ENCODE measurements at regions of chr5 and their contacts with region 1.

Region 1: DNA sequence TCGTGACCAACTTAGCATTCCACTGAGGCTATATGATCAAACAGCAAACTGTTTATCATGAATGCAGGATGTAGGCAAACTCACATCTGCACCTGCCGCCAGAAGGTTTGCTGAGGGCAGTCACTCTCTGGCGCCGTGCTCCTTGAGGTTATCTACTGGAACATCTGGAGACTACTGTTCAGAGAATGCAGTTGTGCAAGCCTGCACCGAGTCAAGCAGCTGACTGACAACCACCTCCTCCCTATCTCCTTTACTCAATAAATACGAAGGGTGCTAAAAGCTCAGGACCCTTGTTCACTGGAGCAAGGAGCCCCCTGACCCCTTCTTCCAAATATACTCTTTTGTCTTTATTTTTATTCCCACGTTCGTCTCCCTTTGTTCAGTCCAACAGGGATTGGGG is 27.1 kb downstream of the CCDC125 start:
- DNase-seq: no peak
- ATAC-seq: no peak
- H3K4me3 Mint-ChIP-seq: no peak overlapping the region
- H3K27ac Mint-ChIP-seq: no peak overlapping the region
- H3K4me1 Mint-ChIP-seq: peaks cover 12% of the 10 kb centered on the region
- H3K27me3 Mint-ChIP-seq: no peaks in the 10 kb centered on the region

Region 2: DNA sequence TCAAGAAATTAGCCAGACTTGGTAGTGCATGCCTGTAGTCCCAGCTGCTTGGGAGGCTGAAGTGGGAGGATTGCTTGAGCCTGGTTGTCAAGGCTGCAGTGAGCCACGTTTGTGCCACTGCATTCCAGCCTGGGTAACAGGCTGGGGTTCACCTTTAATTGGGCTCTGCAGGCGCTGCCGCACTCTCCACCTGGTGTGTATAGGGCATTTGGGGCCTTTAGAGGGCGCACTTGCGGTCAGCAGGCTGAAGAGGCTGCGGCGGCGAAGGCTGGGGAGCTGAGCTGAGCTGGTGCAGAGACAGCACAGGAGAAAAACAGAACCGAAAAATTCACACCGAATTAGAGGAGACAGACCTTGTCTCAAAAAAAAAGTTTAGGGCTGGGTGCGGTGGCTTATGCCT is 39.6 kb before region 1 on chr5:
- CTCF ChIA-PET with region 1: no interaction called
- POLR2A ChIA-PET with region 1: no interaction called
- intact Hi-C with region 1: no loop called
- DNase-seq: peak; percentile 31
- ATAC-seq: peak; percentile 44
- H3K4me3 Mint-ChIP-seq: no peak overlapping the region
- H3K27ac Mint-ChIP-seq: no peak overlapping the region
- H3K4me1 Mint-ChIP-seq: no peaks in the 10 kb centered on the region
- H3K27me3 Mint-ChIP-seq: no peaks in the 10 kb centered on the region

Region 3: DNA sequence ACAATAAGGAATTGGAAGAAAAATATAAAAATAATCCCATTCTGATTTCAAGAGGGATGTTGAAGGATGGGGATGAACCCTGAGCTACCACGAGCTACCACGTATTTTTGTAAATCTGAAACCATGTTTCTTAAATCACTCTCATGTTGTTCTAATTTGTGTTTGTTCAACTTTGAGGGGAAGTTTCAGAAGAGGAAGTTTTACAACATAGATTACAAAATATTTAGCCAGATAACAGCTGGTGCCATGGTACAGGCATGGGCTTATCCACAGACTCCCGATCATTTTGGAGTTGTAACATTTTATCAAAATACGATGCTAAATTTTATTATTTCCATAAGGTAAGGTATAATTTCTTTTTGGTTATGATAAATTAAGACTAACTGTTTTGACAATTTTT is 11.9 kb after region 1 on chr5:
- CTCF ChIA-PET with region 1: no interaction called
- POLR2A ChIA-PET with region 1: no interaction called
- intact Hi-C with region 1: loop called in 1 of 2 experiments (anchors 2 kb)
- DNase-seq: no peak
- ATAC-seq: no peak
- H3K4me3 Mint-ChIP-seq: no peak overlapping the region
- H3K27ac Mint-ChIP-seq: no peak overlapping the region
- H3K4me1 Mint-ChIP-seq: no peaks in the 10 kb centered on the region
- H3K27me3 Mint-ChIP-seq: no peaks in the 10 kb centered on the region

Measured in activated CD4-positive, alpha-beta T cell treated with anti-CD3 and anti-CD28 coated beads for 36 hours (primary cell).